Motor neuron (in vitro differentiated cells): ENCODE measurements at regions of chr2 and their contacts with region 1.

Region 1: GRCh38 chr2:45494269-45494977 is 116.6 kb downstream of the SRBD1 start:
- ATAC-seq: no peak
- H3K4me3 ChIP-seq: no peak overlapping the region
- H3K27ac ChIP-seq: no peak overlapping the region
- H3K4me1 ChIP-seq: no peaks in the 10 kb centered on the region

Region 2: GRCh38 chr2:44974064-44974715 is 520.2 kb before region 1 on chr2:
- in situ Hi-C with region 1: loop called in 2 of 9 experiments (anchors 10 to 25 kb)
- ATAC-seq: peak in 3 of 8 experiments; percentile 83 to 95 (median 90)
- H3K4me3 ChIP-seq: no peak overlapping the region
- H3K27ac ChIP-seq: no peak overlapping the region
- H3K4me1 ChIP-seq: peaks cover 0 to 6% of the 10 kb centered on the region in 2 donors

Region 3: DNA sequence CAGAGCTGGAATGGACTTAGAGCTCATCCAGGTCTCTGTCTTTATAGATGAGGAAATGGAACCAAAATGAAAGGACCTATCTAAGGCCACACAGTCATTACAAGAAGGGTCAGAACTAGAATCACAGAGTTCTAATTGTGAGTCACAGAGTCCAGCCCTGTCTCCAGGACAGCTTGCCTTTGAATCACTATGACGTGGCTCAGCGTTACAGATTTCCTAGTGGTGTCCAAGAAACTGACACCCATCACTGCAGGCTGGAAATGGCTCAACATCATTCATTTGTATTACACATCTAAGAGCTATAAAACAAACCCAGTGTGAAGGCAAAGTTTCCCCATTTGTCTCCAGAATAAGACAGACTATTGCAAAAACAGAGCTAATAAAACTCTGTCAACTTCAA is 320.9 kb before region 1 on chr2:
- in situ Hi-C with region 1: no loop called
- ATAC-seq: peak in 2 of 8 experiments; percentile 64 to 70
- H3K4me3 ChIP-seq: no peak overlapping the region
- H3K27ac ChIP-seq: no peak overlapping the region
- H3K4me1 ChIP-seq: no peaks in the 10 kb centered on the region